HCT116 (cell line): ENCODE measurements at regions of chr12 and their contacts with region 1.

Region 1: GRCh38 chr12:121132601-121133481 is at the start of gene P2RX7:
- DNase-seq: peak; percentile 56
- ATAC-seq: peak; percentile 96
- H3K4me3 ChIP-seq: peak within 1 kb of the TSS; percentile 15 to 41; a peak in 3 of 4 replicates
- H3K27ac ChIP-seq: peak within 1 kb of the TSS; percentile 42
- H3K4me1 ChIP-seq: peaks cover 11 to 25% of the 10 kb centered on the region in 2 experiments
- H3K27me3 ChIP-seq: no peaks in the 10 kb centered on the region
- CTCF ChIP-seq: 0 out of 6 replicates have a peak, but pooled peaks of 1 of the 3 experiments have one; percentile 9
- POLR2A ChIP-seq: no peak
- RAD21 ChIP-seq: peak; percentile 21; the same call in 1 of the 2 replicates
- total RNA-seq, gene P2RX7: 1.5 TPM

Region 2: GRCh38 chr12:121214855-121215745 is 82.3 kb after region 1 on chr12:
- CTCF ChIA-PET with region 1: no interaction called
- POLR2A ChIA-PET with region 1: no interaction called
- RAD21 ChIA-PET with region 1: no interaction called
- intact Hi-C with region 1: loop called (anchors 5 kb)
- DNase-seq: peak; percentile 75
- ATAC-seq: peak; percentile 64
- H3K4me3 ChIP-seq: peak overlapping the region; percentile 13 to 32; a peak in 2 of 4 replicates
- H3K27ac ChIP-seq: peak overlapping the region; percentile 35
- H3K4me1 ChIP-seq: peaks cover 25 to 52% of the 10 kb centered on the region in 2 experiments
- H3K27me3 ChIP-seq: no peaks in the 10 kb centered on the region
- CTCF ChIP-seq: no peak
- POLR2A ChIP-seq: no peak
- RAD21 ChIP-seq: no peak